ENCODE measurements at regions of chr7 and their contacts with region 1.

Region 1: GRCh38 chr7:116809636-116810266 is 52.6 kb upstream of the CAPZA2 start:
- DNase-seq: no peak

Region 2: GRCh38 chr7:116173051-116174028 is 636.4 kb before region 1 on chr7:
- intact Hi-C with region 1: loop called in 1 of 2 experiments (anchors 10 kb)
- DNase-seq: no peak

Region 3: DNA sequence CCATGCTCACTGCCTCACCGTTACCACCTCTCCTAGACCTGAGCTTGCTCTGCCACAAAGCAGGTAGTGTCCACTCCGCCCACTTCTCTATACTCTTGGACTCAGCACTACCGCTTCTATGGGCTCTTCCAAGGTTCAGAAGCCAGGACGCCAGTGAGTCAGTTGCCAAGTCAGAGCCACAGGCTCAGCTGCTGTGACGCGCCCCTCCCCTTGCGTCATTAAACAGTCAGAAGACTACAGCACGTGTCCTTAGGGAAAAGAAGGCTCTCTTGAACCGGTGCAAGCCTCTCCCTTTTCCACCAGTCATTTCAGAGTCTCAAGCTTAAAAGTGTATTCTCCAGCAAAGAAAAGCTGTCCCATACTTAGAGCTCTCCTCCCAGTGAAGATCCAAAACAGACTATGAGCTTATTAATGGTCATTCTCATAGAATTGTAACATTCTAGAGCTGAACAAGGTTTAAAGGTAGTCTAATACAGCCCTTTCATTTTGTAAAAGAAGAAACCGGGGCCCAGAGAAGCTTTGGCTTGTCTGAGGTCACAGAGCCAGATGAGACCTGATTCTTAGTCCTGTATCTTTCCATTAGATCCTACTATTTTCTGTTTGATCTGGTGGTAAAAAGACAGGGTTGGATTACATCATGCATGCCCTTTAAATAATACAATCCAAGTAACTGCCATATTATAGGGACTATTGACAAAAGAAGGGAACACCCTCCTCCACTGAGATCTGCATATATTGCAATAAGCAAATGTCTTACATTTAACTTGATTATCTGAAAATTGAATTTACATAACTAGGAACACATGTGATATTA is 178.6 kb before region 1 on chr7:
- intact Hi-C with region 1: no loop called
- DNase-seq: peak; percentile 88

Region 4: DNA sequence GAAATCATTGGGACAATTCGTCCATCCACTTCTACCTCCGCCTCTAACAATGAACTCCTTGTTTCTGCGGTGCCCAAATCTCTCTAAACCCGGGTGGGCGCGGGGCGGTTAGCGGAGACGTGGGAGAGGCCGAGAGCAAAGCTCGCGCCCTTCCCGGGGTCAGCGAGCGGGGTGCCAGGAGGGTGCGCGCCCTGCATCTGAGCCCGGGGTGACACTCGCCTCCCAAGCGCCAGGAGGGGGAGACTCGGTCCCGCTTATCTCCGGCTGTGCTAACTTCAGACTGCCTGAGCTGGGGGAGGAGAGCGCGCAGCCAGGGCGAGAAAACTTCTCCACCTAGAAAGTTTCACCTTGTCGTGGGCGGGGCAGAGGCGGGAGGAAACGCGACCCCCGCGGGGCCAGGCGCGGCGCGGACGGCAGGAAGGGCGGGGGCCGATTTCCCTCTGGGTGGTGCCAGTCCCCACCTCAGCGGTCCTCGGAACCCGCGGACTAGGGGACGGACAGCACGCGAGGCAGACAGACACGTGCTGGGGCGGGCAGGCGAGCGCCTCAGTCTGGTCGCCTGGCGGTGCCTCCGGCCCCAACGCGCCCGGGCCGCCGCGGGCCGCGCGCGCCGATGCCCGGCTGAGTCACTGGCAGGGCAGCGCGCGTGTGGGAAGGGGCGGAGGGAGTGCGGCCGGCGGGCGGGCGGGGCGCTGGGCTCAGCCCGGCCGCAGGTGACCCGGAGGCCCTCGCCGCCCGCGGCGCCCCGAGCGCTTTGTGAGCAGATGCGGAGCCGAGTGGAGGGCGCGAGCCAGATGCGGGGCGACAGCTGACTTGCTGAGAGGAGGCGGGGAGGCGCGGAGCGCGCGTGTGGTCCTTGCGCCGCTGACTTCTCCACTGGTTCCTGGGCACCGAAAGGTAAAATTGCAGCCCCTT is 137.8 kb before region 1 on chr7 and contains the start of gene MET:
- intact Hi-C with region 1: loop called (anchors 10 kb)
- DNase-seq: peak; percentile 92
- total RNA-seq, gene MET: 15.7 to 26.8 TPM

Measured in posterior vena cava (tissue), 2 donors.